Heart right ventricle (tissue), 16 donors: ENCODE measurements at regions of chr17 and their contacts with region 1.

Region 1: DNA sequence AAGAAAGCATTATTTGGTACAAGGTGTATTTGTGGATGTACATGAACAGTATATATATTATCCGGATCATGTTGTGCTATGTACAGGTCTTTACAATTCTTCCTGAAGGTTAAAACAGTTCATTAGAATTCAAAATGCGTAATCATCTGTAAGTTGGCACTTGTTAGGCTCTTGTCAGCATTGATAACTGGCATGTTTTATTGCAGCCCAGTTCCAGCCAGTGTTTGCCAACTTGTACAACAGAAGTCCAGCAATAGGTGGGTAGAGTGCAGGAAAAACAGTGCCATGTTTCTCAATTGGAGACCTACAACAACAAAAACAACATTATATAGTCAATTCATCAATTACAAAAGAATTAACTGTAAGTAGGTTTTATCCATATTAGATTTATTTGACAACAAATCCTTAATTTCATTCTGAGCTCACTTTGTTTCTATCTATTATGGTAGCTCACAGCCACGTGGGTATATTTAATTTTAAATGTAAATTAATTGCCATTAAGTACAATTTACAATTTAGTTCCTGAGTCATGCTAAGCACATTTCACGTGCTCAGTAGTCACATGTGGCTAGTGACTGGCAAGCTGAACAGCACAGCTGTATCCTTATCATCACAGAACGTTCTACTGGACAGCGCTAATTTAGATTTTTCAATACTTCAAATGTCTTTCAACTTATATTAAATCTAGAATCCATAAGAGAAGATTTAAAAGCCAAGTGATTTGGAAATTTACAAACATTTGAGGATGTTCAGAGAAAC is 8.6 kb upstream of the ANKFY1 start:
- DNase-seq: no peak
- ATAC-seq: peak in 7 of 8 donors; percentile 49 to 82 (median 70)
- H3K4me3 ChIP-seq: no peak overlapping the region
- H3K27ac ChIP-seq: peak overlapping the region in 8 of 10 donors; percentile 38 to 78 (median 60)
- H3K4me1 ChIP-seq: peaks cover 0 to 55% (median 18%) of the 10 kb centered on the region in 9 donors
- H3K27me3 ChIP-seq: no peaks in the 10 kb centered on the region
- CTCF ChIP-seq: no peak

Region 2: DNA sequence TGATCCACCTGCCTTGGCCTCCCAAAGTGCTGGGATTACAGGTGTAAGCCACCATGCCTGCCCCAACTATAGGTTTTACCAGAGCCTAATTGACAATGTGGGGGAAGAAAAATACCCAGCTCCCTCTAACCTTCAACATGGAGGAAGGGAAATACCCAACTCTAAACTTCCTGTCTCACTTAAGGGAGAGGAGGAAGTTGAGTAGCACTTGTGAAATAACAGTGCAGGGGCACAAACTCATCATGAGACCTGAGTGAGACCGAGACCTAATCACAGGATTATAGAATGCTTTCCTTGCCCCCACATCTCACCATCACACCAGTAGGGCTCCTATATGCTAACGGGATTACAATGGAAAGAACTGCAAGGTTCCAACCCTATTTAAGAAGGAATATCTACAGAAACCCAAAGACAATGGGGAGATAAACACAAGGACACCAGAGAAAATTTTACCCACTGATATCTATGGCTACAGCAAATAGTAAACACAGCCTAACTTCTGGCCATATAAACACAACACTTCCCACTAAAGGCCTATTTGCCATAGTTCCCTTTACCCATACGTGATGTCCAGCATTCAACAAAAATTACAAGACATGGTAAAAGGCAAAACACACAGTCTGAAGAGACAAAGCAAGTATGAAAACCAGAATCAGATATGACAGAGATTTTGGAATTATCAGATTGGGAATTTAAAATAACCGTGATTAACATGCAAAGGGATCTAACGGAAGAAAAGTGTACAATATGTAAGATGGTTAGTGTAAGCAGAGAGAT is 1001.1 kb before region 1 on chr17:
- intact Hi-C with region 1: no loop called
- DNase-seq: no peak
- ATAC-seq: no peak
- H3K4me3 ChIP-seq: no peak overlapping the region
- H3K27ac ChIP-seq: peak overlapping the region in 1 of 10 donors; percentile 13
- H3K4me1 ChIP-seq: no peaks in the 10 kb centered on the region
- H3K27me3 ChIP-seq: peaks cover 0 to 5% (median 0%) of the 10 kb centered on the region in 7 donors
- CTCF ChIP-seq: no peak

Region 3: GRCh38 chr17:4229627-4230541 is 42.5 kb before region 1 on chr17:
- intact Hi-C with region 1: loop called in 1 of 10 experiments (anchors 5 kb)
- DNase-seq: peak; percentile 44 to 58
- ATAC-seq: peak; percentile 86 to 96 (median 90)
- H3K4me3 ChIP-seq: peak overlapping the region in 3 of 10 donors; percentile 2 to 11 (median 5)
- H3K27ac ChIP-seq: peak overlapping the region; percentile 54 to 87 (median 76)
- H3K4me1 ChIP-seq: peaks cover 4 to 60% (median 41%) of the 10 kb centered on the region in 9 donors
- H3K27me3 ChIP-seq: no peaks in the 10 kb centered on the region
- CTCF ChIP-seq: no peak

Region 4: GRCh38 chr17:4329838-4330237 is 57.4 kb after region 1 on chr17:
- intact Hi-C with region 1: no loop called
- DNase-seq: no peak
- ATAC-seq: no peak
- H3K4me3 ChIP-seq: no peak overlapping the region
- H3K27ac ChIP-seq: no peak overlapping the region
- H3K4me1 ChIP-seq: peaks cover 5 to 50% (median 36%) of the 10 kb centered on the region in 9 donors
- H3K27me3 ChIP-seq: no peaks in the 10 kb centered on the region
- CTCF ChIP-seq: no peak